Activated T-helper 1 cell treated with anti-CD3 and anti-CD28 coated beads, Interleukin-12 subunit alpha, Interleukin-12 subunit beta, Interleukin-2, Interleukin-4 antibody, amounts not matched to agents 30 ng/mL and 10 ng/mL and 1 ng/mL, durations not matched to agents 14 hours and 24 hours and 36 hours (primary cell): ENCODE measurements at regions of chr13 and their contacts with region 1.

Region 1: GRCh38 chr13:45464687-45465453 is at the start of gene COG3:
- DNase-seq: peak; percentile 94
- H3K4me3 Mint-ChIP-seq: peak within 1 kb of the TSS; percentile 95
- H3K27ac Mint-ChIP-seq: peak within 1 kb of the TSS; percentile 79
- H3K4me1 Mint-ChIP-seq: peaks cover 43% of the 10 kb centered on the region
- H3K27me3 Mint-ChIP-seq: peaks cover 11% of the 10 kb centered on the region
- total RNA-seq, gene COG3: 22.9 and 23.2 TPM in 2 replicates

Region 2: GRCh38 chr13:45119991-45120864 is 344.6 kb before region 1 on chr13 and contains the start of gene GTF2F2:
- intact Hi-C with region 1: loop called (anchors 1 kb)
- DNase-seq: peak; percentile 85
- H3K4me3 Mint-ChIP-seq: no peak within 1 kb of the TSS
- H3K27ac Mint-ChIP-seq: no peak within 1 kb of the TSS
- H3K4me1 Mint-ChIP-seq: peaks cover 13% of the 10 kb centered on the region
- H3K27me3 Mint-ChIP-seq: no peaks in the 10 kb centered on the region
- total RNA-seq, gene GTF2F2: 30.1 and 30.8 TPM in 2 replicates

Region 3: DNA sequence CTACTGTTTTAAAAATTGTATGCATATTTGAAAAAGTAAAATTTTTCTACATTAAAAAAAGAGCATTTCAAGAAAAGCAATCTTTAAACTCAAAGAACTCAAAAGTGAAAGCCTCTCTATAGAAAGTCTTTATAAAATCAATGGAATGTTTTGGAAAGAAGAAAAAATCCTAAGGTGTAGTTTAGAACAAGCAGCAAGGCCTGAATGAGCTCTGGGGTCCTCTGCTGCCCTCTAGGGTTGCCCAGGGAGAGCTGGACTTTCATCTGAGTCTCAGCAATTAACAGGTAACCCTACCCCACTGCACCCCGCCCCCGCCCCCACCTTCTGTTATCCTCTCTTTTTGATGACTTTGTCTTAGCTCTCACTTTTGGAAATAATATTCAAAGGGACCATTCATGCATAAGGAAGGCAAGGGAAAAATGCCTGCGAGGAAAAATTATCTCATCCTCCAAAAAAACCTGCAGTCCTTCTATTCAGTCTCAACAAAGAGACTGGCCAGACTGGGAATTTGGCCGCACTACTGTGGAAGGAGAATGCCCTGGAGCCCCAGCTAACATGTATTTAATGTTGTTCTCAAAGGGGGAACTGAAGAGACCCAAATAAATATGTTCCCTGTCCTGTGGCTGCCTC is 70.8 kb before region 1 on chr13:
- intact Hi-C with region 1: loop called (anchors 1 kb)
- DNase-seq: no peak
- H3K4me3 Mint-ChIP-seq: no peak overlapping the region
- H3K27ac Mint-ChIP-seq: no peak overlapping the region
- H3K4me1 Mint-ChIP-seq: peaks cover 51% of the 10 kb centered on the region
- H3K27me3 Mint-ChIP-seq: no peaks in the 10 kb centered on the region

Region 4: GRCh38 chr13:45441633-45442032 is 23.2 kb before region 1 on chr13:
- intact Hi-C with region 1: loop called (anchors 1 kb)
- DNase-seq: no peak
- H3K4me3 Mint-ChIP-seq: no peak overlapping the region
- H3K27ac Mint-ChIP-seq: peak overlapping the region; percentile 35
- H3K4me1 Mint-ChIP-seq: peaks cover 9% of the 10 kb centered on the region
- H3K27me3 Mint-ChIP-seq: peaks cover 7% of the 10 kb centered on the region

Region 5: GRCh38 chr13:46184277-46184699 is 719.4 kb after region 1 on chr13:
- intact Hi-C with region 1: loop called (anchors 2 kb)
- DNase-seq: peak; percentile 64
- H3K4me3 Mint-ChIP-seq: peak overlapping the region; percentile 97
- H3K27ac Mint-ChIP-seq: peak overlapping the region; percentile 99
- H3K4me1 Mint-ChIP-seq: peaks cover 39% of the 10 kb centered on the region
- H3K27me3 Mint-ChIP-seq: no peaks in the 10 kb centered on the region